Psoas muscle (tissue), 8 donors: ENCODE measurements at regions of chr15 and their contacts with region 1.

Region 1: DNA sequence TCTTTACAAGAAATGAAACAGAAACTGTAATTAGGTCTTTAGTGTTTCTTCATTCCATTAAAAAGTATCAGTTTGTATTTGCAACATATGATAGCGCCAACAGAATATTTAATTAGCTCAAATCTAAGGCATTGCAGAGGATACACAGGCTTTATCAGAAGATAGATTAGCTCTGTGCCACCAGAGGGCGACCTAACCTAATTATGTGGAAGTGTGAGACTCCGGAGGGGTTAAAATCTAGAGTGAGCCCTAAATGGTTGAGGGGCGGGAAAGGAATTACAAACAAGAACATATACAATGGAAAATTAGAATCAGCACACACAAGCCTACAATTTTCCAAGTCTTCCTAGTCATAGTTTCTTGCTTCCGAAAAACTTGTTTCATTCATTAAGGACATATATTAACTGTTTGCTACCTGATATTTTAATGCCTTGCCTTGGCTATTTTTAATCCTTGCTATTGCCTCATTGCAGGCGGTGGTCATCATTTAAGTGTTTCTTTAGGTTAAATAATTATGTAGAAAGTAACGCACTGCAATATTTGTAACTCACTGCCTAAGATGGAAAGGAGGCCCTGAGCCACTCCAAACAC is 18.0 kb upstream of the RYR3 start:
- DNase-seq: peak in 1 of 2 donors; percentile 24
- ATAC-seq: peak; percentile 61 to 90 (median 78)
- H3K4me3 ChIP-seq: peak overlapping the region; percentile 6
- H3K27ac ChIP-seq: peak overlapping the region; percentile 72
- H3K4me1 ChIP-seq: no peaks in the 10 kb centered on the region
- H3K27me3 ChIP-seq: no peaks in the 10 kb centered on the region
- CTCF ChIP-seq: peak; percentile 72

Region 2: GRCh38 chr15:33706173-33706572 is 413.4 kb after region 1 on chr15:
- intact Hi-C with region 1: loop called (anchors 5 kb)
- DNase-seq: no peak
- ATAC-seq: no peak
- H3K4me3 ChIP-seq: no peak overlapping the region
- H3K27ac ChIP-seq: no peak overlapping the region
- H3K4me1 ChIP-seq: no peaks in the 10 kb centered on the region
- H3K27me3 ChIP-seq: no peaks in the 10 kb centered on the region
- CTCF ChIP-seq: no peak